ENCODE measurements at regions of chr17 and their contacts with region 1.

Region 1: GRCh38 chr17:4966844-4967538 is 626 bp downstream of the SPAG7 start:
- DNase-seq: peak; percentile 98
- ATAC-seq: peak; percentile 92 to 93

Region 2: GRCh38 chr17:4949321-4950074 is 17.5 kb before region 1 on chr17:
- intact Hi-C with region 1: loop called in 1 of 2 experiments (anchors 2 kb)
- DNase-seq: peak; percentile 84
- ATAC-seq: peak; percentile 8 to 55